GM12878 (cell line): ENCODE measurements at regions of chr4 and their contacts with region 1.

Region 1: GRCh38 chr4:17636696-17637622 is 22.5 kb downstream of the MED28 start:
- DNase-seq: no peak
- ATAC-seq: peak; percentile 99
- H3K4me3 ChIP-seq: no peak overlapping the region
- H3K27ac ChIP-seq: no peak overlapping the region
- H3K4me1 ChIP-seq: no peaks in the 10 kb centered on the region
- H3K27me3 ChIP-seq: no peaks in the 10 kb centered on the region
- CTCF ChIP-seq: peak; percentile 81 to 87 (median 81)
- EP300 ChIP-seq: no peak
- POLR2A ChIP-seq: peak; percentile 50
- RAD21 ChIP-seq: peak; percentile 80

Region 2: DNA sequence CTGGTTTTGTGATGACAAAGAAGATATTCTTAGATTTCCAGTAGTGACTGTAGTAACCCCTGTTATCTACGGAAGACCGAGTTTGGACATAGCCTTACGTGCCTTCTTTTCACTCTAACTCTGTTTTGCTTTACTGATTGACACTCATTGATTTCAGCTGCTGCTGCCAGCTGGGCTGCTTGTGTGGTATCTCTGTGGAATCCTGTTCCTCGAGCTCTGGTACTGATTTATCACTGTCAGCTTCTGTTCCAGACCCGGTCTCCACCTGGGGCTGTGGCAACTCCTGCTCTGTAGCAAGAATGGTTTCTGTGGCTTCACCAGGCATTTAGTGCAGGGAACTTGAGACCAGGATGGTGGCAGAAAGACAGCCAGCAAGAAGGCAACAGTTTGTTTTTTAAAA is 84.5 kb before region 1 on chr4:
- CTCF ChIA-PET with region 1: interaction called, 70 read pairs
- POLR2A ChIA-PET with region 1: interaction called, 5 read pairs
- RAD21 ChIA-PET with region 1: interaction called, 17 read pairs
- SMC1A ChIA-PET with region 1: interaction called, 32 read pairs
- in situ Hi-C with region 1: loop called (anchors 5 kb)
- intact Hi-C with region 1: loop called (anchors 1 kb)
- DNase-seq: no peak
- ATAC-seq: no peak
- H3K4me3 ChIP-seq: no peak overlapping the region
- H3K27ac ChIP-seq: no peak overlapping the region
- H3K4me1 ChIP-seq: no peaks in the 10 kb centered on the region
- H3K27me3 ChIP-seq: no peaks in the 10 kb centered on the region
- CTCF ChIP-seq: no peak
- EP300 ChIP-seq: no peak
- POLR2A ChIP-seq: no peak
- RAD21 ChIP-seq: no peak